Gastrocnemius medialis (tissue), 4 donors: ENCODE measurements at regions of chr10 and their contacts with region 1.

Region 1: DNA sequence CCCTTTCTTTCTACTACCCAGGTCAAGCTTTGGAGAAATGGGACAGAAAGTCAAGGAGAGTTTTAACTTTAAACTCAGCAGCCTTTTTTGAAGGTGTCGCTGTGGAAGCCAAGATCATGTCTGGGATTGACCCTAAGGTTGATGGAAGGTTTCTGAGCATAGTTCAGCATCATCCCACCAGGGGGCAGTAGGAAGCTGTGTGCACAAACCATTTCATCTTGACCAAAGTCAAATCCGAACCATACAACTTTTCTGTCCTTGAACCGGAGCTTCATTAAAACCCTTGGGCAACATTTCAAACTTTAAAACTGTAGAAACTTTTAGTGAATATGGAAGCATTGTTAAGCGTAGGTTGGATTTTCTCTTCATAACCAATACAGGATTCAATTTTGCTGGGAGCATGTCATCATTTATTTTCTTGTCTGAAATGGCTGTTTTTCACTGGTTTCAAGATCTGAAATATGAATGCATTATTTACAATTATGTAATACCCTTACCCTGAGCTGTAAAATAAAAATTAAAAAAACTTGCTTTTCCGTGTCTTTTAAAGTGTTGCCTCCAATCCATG is 214.4 kb upstream of the KIAA1217 start:
- DNase-seq: peak; percentile 26 to 62
- ATAC-seq: peak; percentile 89
- H3K4me3 ChIP-seq: no peak overlapping the region
- H3K27ac ChIP-seq: no peak overlapping the region
- H3K4me1 ChIP-seq: peaks cover 6 to 11% of the 10 kb centered on the region in 2 donors
- H3K27me3 ChIP-seq: no peaks in the 10 kb centered on the region
- CTCF ChIP-seq: peak; percentile 93 to 96 (median 94)
- POLR2A ChIP-seq: no peak

Region 2: DNA sequence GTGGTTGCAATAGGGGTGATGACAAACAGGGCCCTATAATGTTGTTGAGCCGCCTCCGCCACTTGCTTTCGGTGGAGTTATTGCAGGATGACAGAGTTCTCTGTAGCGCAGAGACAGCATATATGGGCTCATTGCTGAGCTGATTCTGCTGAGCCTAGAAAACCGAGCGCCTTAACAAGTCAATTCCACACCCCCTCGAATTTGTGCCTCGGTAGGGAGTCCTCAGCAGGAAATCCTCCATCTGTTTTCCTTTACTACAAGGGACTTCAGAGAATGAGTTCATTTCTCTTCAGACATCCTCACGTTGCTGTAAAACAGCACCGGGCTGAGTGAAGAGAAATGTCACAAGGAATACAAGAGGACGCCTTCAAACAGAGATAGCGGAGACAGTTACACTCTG is 123.7 kb after region 1 on chr10:
- in situ Hi-C with region 1: no loop called
- intact Hi-C with region 1: loop called (anchors 5 kb)
- DNase-seq: no peak
- ATAC-seq: no peak
- H3K4me3 ChIP-seq: peak overlapping the region; percentile 14 to 45 (median 36)
- H3K27ac ChIP-seq: peak overlapping the region; percentile 90 to 96 (median 92)
- H3K4me1 ChIP-seq: peaks cover 30 to 42% of the 10 kb centered on the region in 2 donors
- H3K27me3 ChIP-seq: no peaks in the 10 kb centered on the region
- CTCF ChIP-seq: no peak
- POLR2A ChIP-seq: peak; percentile 20 to 38

Region 3: GRCh38 chr10:24193330-24193729 is 198.8 kb after region 1 on chr10:
- in situ Hi-C with region 1: loop called (anchors 5 kb)
- intact Hi-C with region 1: loop called (anchors 1 kb)
- DNase-seq: no peak
- ATAC-seq: no peak
- H3K4me3 ChIP-seq: no peak overlapping the region
- H3K27ac ChIP-seq: no peak overlapping the region
- H3K4me1 ChIP-seq: peaks cover 10 to 19% of the 10 kb centered on the region in 2 donors
- H3K27me3 ChIP-seq: no peaks in the 10 kb centered on the region
- CTCF ChIP-seq: no peak
- POLR2A ChIP-seq: no peak

Region 4: GRCh38 chr10:24201503-24202180 is 207.1 kb after region 1 on chr10:
- in situ Hi-C with region 1: no loop called
- intact Hi-C with region 1: loop called (anchors 1 kb)
- DNase-seq: no peak
- ATAC-seq: no peak
- H3K4me3 ChIP-seq: no peak overlapping the region
- H3K27ac ChIP-seq: peak overlapping the region in 1 of 4 donors; percentile 47
- H3K4me1 ChIP-seq: peaks cover 24 to 35% of the 10 kb centered on the region in 2 donors
- H3K27me3 ChIP-seq: no peaks in the 10 kb centered on the region
- CTCF ChIP-seq: no peak
- POLR2A ChIP-seq: no peak

Region 5: GRCh38 chr10:24518981-24519597 is 524.5 kb after region 1 on chr10:
- in situ Hi-C with region 1: loop called in 2 of 4 experiments (anchors 10 kb)
- intact Hi-C with region 1: loop called (anchors 1 kb)
- DNase-seq: peak; percentile 38 to 62
- ATAC-seq: peak; percentile 55 to 78
- H3K4me3 ChIP-seq: no peak overlapping the region
- H3K27ac ChIP-seq: peak overlapping the region; percentile 50 to 71 (median 66)
- H3K4me1 ChIP-seq: peaks cover 11 to 12% of the 10 kb centered on the region in 2 donors
- H3K27me3 ChIP-seq: no peaks in the 10 kb centered on the region
- CTCF ChIP-seq: peak; percentile 63 to 81 (median 78)
- POLR2A ChIP-seq: no peak

Region 6: GRCh38 chr10:24556750-24557742 is 562.5 kb after region 1 on chr10:
- in situ Hi-C with region 1: loop called in 1 of 4 experiments (anchors 25 kb)
- intact Hi-C with region 1: loop called (anchors 2 kb)
- DNase-seq: no peak
- ATAC-seq: peak in 1 of 2 donors; percentile 45
- H3K4me3 ChIP-seq: no peak overlapping the region
- H3K27ac ChIP-seq: no peak overlapping the region
- H3K4me1 ChIP-seq: peaks cover 24 to 32% of the 10 kb centered on the region in 2 donors
- H3K27me3 ChIP-seq: no peaks in the 10 kb centered on the region
- CTCF ChIP-seq: peak; percentile 58 to 73 (median 63)
- POLR2A ChIP-seq: no peak